Lower leg skin (tissue), 4 donors: ENCODE measurements at regions of chr2 and their contacts with region 1.

Region 1: GRCh38 chr2:135709992-135710391 is 31.7 kb upstream of the UBXN4 start:
- DNase-seq: peak; percentile 40 to 91
- H3K4me3 ChIP-seq: no peak overlapping the region
- CTCF ChIP-seq: peak in 1 of 3 donors; percentile 87
- POLR2A ChIP-seq: no peak

Region 2: GRCh38 chr2:135004005-135004746 is 705.8 kb before region 1 on chr2:
- intact Hi-C with region 1: loop called (anchors 5 kb)
- DNase-seq: peak; percentile 43 to 92
- H3K4me3 ChIP-seq: no peak overlapping the region
- CTCF ChIP-seq: peak in 1 of 3 donors; percentile 60
- POLR2A ChIP-seq: no peak

Region 3: DNA sequence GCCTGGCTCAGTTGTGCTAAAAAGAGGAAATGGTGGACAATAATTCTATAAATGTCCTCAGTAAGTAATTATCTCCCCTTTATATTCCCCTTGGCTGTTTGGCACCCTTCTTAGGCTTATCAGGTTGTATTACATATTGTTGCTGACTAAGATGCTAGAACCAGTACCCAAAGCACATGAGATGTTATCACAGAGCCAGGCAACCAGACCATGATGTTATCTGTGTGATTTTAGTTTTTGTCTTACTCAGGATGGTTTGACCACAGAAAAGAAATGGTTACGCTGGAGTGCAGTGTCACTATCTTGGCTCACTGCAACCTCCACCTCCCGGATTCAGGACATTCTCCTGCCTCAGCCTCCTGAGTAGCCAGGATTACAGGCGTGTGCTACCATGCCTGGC is 163.6 kb before region 1 on chr2:
- intact Hi-C with region 1: no loop called
- DNase-seq: no peak
- H3K4me3 ChIP-seq: no peak overlapping the region
- CTCF ChIP-seq: no peak
- POLR2A ChIP-seq: no peak